AG04450 (cell line): ENCODE measurements at regions of chr19 and their contacts with region 1.

Region 1: GRCh38 chr19:51473009-51473707 is 5.2 kb upstream of the CEACAM18 start:
- DNase-seq: peak; percentile 30
- H3K4me3 ChIP-seq: no peak overlapping the region
- H3K27ac ChIP-seq: no peak overlapping the region
- H3K27me3 ChIP-seq: no peaks in the 10 kb centered on the region
- CTCF ChIP-seq: peak; percentile 77

Region 2: GRCh38 chr19:51219307-51219706 is 253.9 kb before region 1 on chr19:
- CTCF ChIA-PET with region 1: no interaction called
- POLR2A ChIA-PET with region 1: no interaction called
- DNase-seq: no peak
- H3K4me3 ChIP-seq: no peak overlapping the region
- H3K27ac ChIP-seq: no peak overlapping the region
- H3K27me3 ChIP-seq: no peaks in the 10 kb centered on the region
- CTCF ChIP-seq: no peak

Region 3: DNA sequence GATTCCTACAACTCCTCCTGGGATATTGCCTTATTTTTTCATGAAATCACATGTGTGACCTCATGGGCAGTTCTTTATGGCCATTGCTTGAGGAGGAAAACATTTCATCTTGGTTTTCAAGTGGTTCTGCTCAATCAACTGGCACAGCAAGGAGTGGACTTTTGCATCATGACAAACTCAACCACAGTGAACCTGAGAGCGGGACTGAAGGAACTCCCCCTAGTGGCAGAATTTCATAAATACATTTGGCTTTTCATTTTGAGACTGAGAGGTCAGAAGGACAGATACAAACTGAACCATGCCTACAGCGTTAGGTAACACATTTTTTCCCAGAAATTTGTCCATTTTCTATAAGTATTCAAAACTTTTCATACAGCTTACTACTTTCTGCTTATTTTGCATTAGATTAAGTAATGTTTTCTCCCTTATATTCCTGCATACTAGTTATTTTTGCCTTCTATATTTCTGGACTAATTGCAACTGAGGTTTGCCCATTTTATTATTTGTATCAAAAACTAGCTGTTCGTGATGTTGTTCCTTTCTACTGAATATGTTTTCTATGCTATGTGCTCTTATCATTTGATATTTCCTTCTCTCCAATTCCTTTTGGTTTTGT is 41.8 kb after region 1 on chr19:
- CTCF ChIA-PET with region 1: interaction called, 15 read pairs
- POLR2A ChIA-PET with region 1: no interaction called
- DNase-seq: peak; percentile 7
- H3K4me3 ChIP-seq: no peak overlapping the region
- H3K27ac ChIP-seq: no peak overlapping the region
- H3K27me3 ChIP-seq: no peaks in the 10 kb centered on the region
- CTCF ChIP-seq: peak; percentile 76

Region 4: DNA sequence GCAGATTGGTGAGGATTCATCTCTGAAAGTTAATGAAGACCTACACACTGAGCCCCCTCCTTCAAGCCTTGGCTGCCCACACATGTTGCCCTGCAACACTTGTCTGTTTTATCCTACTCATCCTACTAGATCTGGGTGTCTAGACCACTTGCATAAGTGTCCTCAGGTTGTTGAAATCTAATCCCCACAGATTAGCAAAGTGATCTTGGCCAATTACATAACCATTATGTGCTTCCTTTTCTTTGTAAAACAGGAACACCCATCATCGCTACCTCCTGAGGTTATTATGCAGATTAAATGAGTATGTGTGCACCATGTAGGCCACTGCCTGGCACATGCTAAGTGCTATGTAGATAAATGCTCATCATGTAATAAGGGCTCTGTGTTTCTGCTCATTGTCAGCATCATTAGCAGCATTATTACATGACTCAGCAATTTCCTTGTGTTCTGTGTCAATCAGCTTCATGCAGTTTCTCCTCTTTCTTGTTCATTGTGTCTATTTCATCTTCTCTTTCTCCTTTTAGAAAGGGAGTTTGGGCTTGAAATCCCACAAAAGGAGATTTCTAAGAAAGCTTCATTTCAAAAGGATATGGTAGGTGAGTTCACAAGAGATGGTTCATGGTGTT is 113.1 kb after region 1 on chr19:
- CTCF ChIA-PET with region 1: no interaction called
- POLR2A ChIA-PET with region 1: no interaction called
- DNase-seq: no peak
- H3K4me3 ChIP-seq: no peak overlapping the region
- H3K27ac ChIP-seq: no peak overlapping the region
- H3K27me3 ChIP-seq: no peaks in the 10 kb centered on the region
- CTCF ChIP-seq: no peak

Region 5: GRCh38 chr19:51777570-51778462 is 304.7 kb after region 1 on chr19:
- CTCF ChIA-PET with region 1: interaction called, 21 read pairs
- POLR2A ChIA-PET with region 1: no interaction called
- DNase-seq: peak; percentile 63
- H3K4me3 ChIP-seq: no peak overlapping the region
- H3K27ac ChIP-seq: no peak overlapping the region
- H3K27me3 ChIP-seq: no peaks in the 10 kb centered on the region
- CTCF ChIP-seq: peak; percentile 76

Region 6: GRCh38 chr19:51971624-51972023 is 498.5 kb after region 1 on chr19:
- CTCF ChIA-PET with region 1: no interaction called
- POLR2A ChIA-PET with region 1: interaction called, 12 read pairs
- DNase-seq: no peak
- H3K4me3 ChIP-seq: no peak overlapping the region
- H3K27ac ChIP-seq: no peak overlapping the region
- H3K27me3 ChIP-seq: no peaks in the 10 kb centered on the region
- CTCF ChIP-seq: no peak